ENCODE measurements at regions of chr9 and their contacts with region 1.

Region 1: DNA sequence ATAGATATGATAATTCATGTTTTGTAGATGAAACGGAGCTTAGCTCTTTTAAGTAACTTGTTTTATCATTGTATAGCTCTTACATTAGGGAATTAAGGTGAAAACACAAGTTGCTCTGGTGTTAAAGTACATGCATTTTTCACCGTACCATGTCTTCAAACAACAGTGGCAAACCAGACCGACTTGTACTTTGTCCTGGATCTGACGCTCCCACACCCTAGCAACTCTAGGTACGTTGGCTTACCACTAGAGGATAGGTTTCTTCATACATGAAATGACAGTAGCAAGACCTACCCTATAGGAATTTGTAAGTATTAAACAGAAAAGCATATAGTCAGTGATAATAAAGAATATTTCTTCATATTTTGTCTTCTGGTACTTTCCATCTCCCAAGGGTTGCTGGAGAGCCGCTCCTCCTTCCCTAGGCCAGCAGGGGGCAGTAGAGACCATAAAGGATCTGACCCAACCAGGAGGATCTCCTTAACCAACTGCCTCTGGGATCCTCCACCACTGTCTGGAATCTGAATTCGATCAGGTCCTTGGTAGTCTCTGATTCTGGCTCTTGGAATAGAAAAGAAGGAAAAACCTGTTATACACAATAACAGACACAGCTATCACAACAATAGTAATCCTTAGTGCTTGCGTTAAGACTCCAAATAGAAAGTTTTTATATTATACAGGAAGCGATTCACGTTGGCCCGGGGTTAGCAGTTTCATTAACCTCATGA is 136.7 kb downstream of the CAVIN4 start:
- DNase-seq: peak; percentile 67
- H3K4me3 Mint-ChIP-seq: no peak overlapping the region
- H3K27ac Mint-ChIP-seq: no peak overlapping the region
- H3K4me1 Mint-ChIP-seq: no peaks in the 10 kb centered on the region
- H3K27me3 Mint-ChIP-seq: peaks cover 21% of the 10 kb centered on the region
- CTCF ChIP-seq: peak; percentile 71

Region 2: GRCh38 chr9:100639854-100640253 is 74.7 kb before region 1 on chr9:
- CTCF ChIA-PET with region 1: no interaction called
- intact Hi-C with region 1: no loop called
- DNase-seq: no peak
- H3K4me3 Mint-ChIP-seq: no peak overlapping the region
- H3K27ac Mint-ChIP-seq: no peak overlapping the region
- H3K4me1 Mint-ChIP-seq: no peaks in the 10 kb centered on the region
- H3K27me3 Mint-ChIP-seq: peaks cover 57% of the 10 kb centered on the region
- CTCF ChIP-seq: no peak

Region 3: DNA sequence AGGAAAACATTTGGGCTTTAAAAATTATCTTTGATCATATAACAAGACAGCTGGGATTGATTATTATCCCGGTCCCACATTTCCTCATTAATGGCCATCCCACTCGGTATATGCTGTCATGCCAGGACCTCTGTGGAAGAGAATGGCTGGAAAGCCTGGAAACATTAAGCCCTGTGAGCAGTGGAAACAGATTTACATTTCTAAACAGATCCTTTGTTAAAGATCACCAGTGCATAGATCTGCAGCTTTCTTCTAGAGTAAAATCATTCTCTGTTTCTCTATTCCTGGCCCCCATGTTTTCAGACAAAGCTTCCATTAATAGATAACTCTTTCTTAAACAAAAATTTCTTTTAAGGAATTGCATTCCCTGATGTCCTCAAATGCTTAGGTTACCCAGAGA is 15.6 kb after region 1 on chr9:
- CTCF ChIA-PET with region 1: no interaction called
- intact Hi-C with region 1: no loop called
- DNase-seq: no peak
- H3K4me3 Mint-ChIP-seq: no peak overlapping the region
- H3K27ac Mint-ChIP-seq: no peak overlapping the region
- H3K4me1 Mint-ChIP-seq: no peaks in the 10 kb centered on the region
- H3K27me3 Mint-ChIP-seq: no peaks in the 10 kb centered on the region
- CTCF ChIP-seq: no peak

Region 4: DNA sequence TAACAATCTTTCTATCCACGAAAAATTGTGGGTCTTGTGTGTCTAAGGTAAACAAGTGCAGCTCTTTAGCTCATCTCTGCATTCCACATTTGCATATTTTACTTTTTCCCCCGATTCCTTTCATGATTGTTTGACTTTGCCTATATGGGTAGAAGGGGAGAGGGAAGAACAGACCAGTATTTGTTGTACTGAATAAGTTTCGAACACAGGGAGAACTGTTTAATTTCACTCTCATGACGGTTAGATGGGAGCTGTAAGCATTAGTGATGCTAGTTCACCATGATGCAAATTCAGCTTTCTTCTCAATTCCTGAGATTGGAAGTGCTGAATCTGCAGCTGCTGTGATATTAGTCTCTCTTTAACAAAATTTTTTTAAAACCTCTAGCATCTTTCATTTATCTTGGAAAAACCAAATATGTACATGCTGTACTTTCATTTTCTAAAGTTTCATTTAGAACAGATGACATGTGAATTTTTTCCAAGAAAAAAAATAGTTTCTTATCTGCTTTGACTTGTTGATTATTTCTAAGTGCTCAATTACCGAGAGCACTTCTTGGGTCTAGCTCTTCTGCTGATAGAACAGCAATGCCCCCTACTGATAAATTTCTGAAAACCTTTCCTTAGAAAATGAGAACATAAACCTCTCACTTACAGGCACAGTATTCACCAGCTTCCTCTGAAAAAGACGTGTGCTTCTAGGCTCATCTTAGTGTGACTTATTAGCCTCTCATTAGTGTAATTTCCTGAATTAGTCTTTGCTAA is 520.8 kb after region 1 on chr9:
- CTCF ChIA-PET with region 1: no interaction called
- intact Hi-C with region 1: loop called (anchors 5 kb)
- DNase-seq: no peak
- H3K4me3 Mint-ChIP-seq: no peak overlapping the region
- H3K27ac Mint-ChIP-seq: no peak overlapping the region
- H3K4me1 Mint-ChIP-seq: no peaks in the 10 kb centered on the region
- H3K27me3 Mint-ChIP-seq: no peaks in the 10 kb centered on the region
- CTCF ChIP-seq: no peak

Region 5: DNA sequence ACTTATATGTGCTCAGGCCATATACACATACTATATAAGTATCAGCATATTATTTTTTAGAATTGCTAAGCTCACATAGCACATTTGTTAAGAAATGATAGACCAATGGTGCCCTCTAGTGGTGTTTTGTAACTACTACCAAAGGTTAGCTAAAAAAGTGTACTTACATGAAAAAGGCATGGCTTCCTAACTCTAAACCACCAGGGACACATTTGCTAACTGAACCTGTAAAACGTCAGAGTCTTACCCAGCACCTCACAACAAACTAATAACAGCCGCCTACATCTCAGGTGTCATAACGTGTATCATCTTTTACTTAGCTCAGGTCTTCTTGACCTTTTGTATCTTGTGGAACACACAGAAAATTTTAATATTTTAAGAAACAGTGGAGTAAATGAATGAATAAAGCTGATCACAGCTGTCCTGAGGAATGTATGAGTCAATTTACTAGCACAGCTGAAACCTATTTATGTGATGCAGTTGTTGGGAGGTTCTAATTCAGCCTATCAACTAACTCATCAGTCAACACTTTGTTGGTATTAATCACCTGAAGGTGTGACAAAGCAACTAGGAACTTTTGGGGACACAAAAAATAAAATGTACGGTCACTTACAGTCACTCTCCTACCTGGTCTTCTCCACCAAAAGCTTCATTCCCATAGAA is 597.4 kb after region 1 on chr9:
- CTCF ChIA-PET with region 1: no interaction called
- intact Hi-C with region 1: loop called (anchors 1 kb)
- DNase-seq: peak; percentile 15
- H3K4me3 Mint-ChIP-seq: no peak overlapping the region
- H3K27ac Mint-ChIP-seq: no peak overlapping the region
- H3K4me1 Mint-ChIP-seq: peaks cover 18% of the 10 kb centered on the region
- H3K27me3 Mint-ChIP-seq: peaks cover 14% of the 10 kb centered on the region
- CTCF ChIP-seq: peak; percentile 45